ENCODE measurements at regions of chr11 and their contacts with region 1.

Region 1: DNA sequence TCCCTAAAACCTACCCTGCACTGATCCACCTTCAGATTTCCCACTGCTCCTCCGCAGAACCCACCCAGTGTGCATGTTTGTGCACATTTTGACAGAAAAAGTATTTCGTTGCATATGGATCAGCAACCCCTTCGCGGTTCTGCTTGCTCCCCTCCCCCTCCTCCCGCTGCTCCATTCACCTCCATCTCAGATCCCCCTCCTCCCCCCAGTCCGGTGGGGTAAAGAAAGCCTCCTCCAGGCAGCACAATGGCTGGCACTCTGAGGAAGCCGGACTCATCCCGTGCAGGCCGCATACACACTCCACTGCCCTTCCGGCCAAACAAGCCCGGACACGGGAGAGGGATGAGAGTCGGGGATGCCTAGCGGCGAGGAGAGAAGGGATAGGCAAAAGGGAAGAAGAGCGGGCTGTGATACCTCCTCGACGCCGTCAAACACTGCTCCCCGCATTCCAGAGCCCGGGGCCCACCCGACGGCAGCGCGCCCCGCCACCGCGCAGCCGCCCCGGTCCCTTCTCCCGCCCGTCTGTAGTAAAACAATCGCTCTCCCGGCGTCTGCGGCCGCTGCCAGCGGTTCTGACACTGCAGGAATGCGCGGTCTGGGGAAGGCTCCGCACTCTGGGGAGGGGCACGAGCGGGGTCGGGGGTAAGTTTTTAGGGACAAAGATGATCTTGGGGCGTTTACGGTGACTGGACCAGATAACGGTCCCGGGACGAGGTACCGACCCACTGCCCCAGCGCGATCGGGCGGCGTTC is 915 bp downstream of the FEZ1 start:
- DNase-seq: peak; percentile 84
- H3K4me3 ChIP-seq: peak overlapping the region; percentile 70 to 86 (median 80)
- H3K27ac ChIP-seq: peak overlapping the region; percentile 86 to 91 (median 88)
- H3K4me1 ChIP-seq: peaks cover 5 to 30% (median 22%) of the 10 kb centered on the region in 4 donors
- H3K27me3 ChIP-seq: no peaks in the 10 kb centered on the region
- CTCF ChIP-seq: no peak
- EP300 ChIP-seq: no peak
- POLR2A ChIP-seq: peak; percentile 19

Region 2: GRCh38 chr11:125001079-125001778 is 493.9 kb before region 1 on chr11:
- intact Hi-C with region 1: no loop called
- DNase-seq: no peak
- H3K4me3 ChIP-seq: no peak overlapping the region
- H3K27ac ChIP-seq: no peak overlapping the region
- H3K4me1 ChIP-seq: no peaks in the 10 kb centered on the region
- H3K27me3 ChIP-seq: no peaks in the 10 kb centered on the region
- CTCF ChIP-seq: no peak
- EP300 ChIP-seq: no peak
- POLR2A ChIP-seq: no peak

Region 3: DNA sequence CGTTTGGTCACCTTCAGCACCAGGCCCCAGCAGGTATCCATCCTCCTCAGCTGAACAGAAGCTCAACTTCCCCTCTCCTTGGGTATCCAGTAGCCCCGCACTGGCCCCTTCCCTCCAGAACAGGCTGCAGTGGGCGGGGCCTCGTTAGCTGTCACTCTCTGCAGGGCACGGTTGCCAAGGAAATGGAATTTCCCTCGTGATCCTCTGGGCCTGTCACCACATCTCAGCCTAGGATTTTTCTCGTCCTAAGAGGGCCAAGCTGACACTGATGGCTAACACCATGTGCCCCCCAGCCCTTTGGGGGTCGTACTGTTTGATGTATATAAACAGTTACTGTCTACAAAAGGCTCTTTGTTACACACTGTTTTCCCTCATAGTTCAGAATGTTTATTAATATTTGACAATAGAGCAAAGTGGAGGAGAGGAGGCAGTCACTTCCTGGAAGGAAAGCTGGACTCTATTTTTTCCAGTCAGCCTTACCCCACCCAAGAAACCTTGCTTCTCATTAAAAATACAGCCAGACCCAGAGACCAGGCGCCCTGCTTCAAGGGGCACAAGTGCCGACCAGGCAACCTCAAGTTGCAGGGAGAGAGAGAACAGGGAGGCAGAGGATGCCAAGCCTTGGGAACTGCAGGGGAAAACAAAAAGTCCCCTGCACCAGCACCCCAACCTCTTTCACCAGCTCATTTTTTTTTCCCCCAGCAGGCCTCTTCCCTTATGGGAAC is 43.6 kb before region 1 on chr11:
- intact Hi-C with region 1: no loop called
- DNase-seq: no peak
- H3K4me3 ChIP-seq: no peak overlapping the region
- H3K27ac ChIP-seq: peak overlapping the region in 3 of 4 donors; percentile 1 to 40 (median 11)
- H3K4me1 ChIP-seq: peaks cover 10 to 15% (median 13%) of the 10 kb centered on the region in 4 donors
- H3K27me3 ChIP-seq: no peaks in the 10 kb centered on the region
- CTCF ChIP-seq: no peak
- EP300 ChIP-seq: no peak
- POLR2A ChIP-seq: no peak

Region 4: GRCh38 chr11:125569915-125570621 is 74.9 kb after region 1 on chr11:
- intact Hi-C with region 1: loop called (anchors 5 kb)
- DNase-seq: no peak
- H3K4me3 ChIP-seq: peak overlapping the region; percentile 86 to 98 (median 92)
- H3K27ac ChIP-seq: peak overlapping the region; percentile 87 to 94 (median 90)
- H3K4me1 ChIP-seq: peaks cover 10 to 24% (median 23%) of the 10 kb centered on the region in 4 donors
- H3K27me3 ChIP-seq: no peaks in the 10 kb centered on the region
- CTCF ChIP-seq: no peak
- EP300 ChIP-seq: no peak
- POLR2A ChIP-seq: no peak

Region 5: GRCh38 chr11:125625630-125626287 is 130.6 kb after region 1 on chr11:
- intact Hi-C with region 1: loop called (anchors 10 kb)
- DNase-seq: peak; percentile 94
- H3K4me3 ChIP-seq: peak overlapping the region; percentile 64 to 87 (median 68)
- H3K27ac ChIP-seq: peak overlapping the region; percentile 90 to 95 (median 92)
- H3K4me1 ChIP-seq: peaks cover 14 to 33% (median 24%) of the 10 kb centered on the region in 4 donors
- H3K27me3 ChIP-seq: no peaks in the 10 kb centered on the region
- CTCF ChIP-seq: no peak
- EP300 ChIP-seq: no peak
- POLR2A ChIP-seq: no peak